ENCODE measurements at regions of chr9 and their contacts with region 1.

Region 1: DNA sequence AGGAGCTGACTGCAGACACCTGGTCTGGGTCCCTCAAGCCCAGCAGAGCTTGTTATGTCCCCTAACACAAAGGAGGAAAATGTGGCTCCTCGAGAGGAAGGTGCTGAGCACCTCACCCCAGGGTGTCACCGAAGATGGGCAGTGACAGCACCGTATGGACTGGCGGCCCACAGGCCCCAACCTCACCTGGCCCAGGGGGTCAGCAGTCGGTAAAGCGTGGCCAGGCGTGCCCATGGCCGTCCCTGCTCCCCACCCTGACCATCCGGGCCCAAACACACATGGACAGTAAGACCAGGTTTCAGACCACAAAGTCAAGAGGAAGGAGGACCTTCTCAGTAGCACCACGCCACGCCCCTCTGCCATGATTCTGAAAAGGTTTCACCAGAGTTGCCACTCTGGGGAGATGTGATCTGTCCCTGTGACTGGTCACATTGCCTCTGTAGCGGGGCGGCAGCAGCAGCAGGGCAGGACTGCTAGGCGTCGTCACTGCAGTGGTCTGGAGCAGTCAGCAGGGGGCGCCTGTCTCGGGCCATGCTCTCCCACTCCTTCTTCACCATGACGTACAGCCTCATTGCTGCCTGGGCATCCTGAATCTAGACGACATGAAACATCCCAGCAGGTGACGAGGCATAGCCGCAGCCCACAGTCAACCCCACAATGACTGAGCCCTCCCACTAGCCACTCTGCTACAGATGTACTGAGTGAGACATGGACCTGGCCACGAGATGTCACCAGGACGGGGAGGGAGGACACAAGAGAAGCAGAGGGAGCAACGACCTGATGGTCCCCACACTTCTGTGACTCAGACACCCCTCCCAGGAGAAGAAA is 11.1 kb downstream of the REXO4 start:
- DNase-seq: no peak
- H3K4me3 ChIP-seq: no peak overlapping the region
- H3K27ac ChIP-seq: no peak overlapping the region
- H3K4me1 ChIP-seq: peaks cover 0 to 3% (median 0%) of the 10 kb centered on the region in 3 donors
- H3K27me3 ChIP-seq: no peaks in the 10 kb centered on the region
- CTCF ChIP-seq: peak; percentile 65 to 94 (median 88)
- POLR2A ChIP-seq: no peak

Region 2: DNA sequence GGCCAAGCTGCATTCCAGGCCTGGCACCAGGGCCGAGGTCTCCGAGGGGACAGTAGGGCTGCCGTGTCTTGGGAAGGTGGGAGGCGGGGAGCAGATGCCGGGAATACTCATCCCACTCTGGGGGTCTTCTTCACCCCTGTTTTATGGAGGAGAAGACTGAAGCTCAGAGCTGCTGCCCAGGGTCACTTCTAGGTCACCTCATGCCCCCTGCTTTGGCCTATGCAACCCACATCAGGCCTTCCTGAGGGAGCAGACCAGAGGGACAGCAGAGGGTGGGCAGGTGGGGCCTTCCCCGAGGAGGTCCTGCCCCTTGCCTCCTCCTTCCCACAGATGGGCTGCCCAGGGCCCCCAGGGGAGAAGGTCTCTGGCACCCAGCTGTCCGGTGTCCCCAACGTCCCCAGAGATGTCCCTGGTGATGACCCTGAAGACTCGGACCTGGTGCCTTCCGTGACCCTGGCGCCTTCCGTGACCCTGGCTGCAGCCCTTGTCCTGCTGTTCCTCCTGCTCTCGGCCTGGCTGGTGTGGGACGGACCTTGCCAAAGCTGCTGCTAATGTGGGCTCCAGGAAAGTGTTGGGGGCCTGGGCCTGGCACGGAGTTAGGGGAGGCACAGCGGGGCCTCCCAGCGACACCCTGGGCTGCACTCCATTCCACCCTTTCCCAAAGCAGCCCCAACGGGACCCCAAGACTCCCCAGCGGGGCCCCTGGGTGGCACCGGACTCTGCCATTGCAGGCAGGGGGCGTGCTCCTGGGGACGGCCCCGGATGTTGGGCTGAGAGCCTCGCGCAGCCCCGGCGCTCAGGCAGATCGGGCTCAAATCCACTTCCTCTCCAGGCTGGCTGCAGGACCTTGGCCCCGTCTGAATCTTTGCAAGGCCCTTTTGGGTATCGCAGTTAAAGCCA is 78.9 kb after region 1 on chr9:
- intact Hi-C with region 1: loop called (anchors 5 kb)
- DNase-seq: no peak
- H3K4me3 ChIP-seq: no peak overlapping the region
- H3K27ac ChIP-seq: no peak overlapping the region
- H3K4me1 ChIP-seq: peaks cover 5 to 26% (median 6%) of the 10 kb centered on the region in 3 donors
- H3K27me3 ChIP-seq: peaks cover 0 to 43% (median 0%) of the 10 kb centered on the region in 4 donors
- CTCF ChIP-seq: no peak
- POLR2A ChIP-seq: no peak

Region 3: GRCh38 chr9:133545494-133546286 is 139.0 kb after region 1 on chr9:
- intact Hi-C with region 1: no loop called
- DNase-seq: no peak
- H3K4me3 ChIP-seq: no peak overlapping the region
- H3K27ac ChIP-seq: peak overlapping the region in 2 of 4 donors; percentile 24 to 26
- H3K4me1 ChIP-seq: peaks cover 0 to 35% (median 3%) of the 10 kb centered on the region in 3 donors
- H3K27me3 ChIP-seq: no peaks in the 10 kb centered on the region
- CTCF ChIP-seq: no peak
- POLR2A ChIP-seq: no peak